ENCODE measurements at regions of chr16 and their contacts with region 1.

Region 1: DNA sequence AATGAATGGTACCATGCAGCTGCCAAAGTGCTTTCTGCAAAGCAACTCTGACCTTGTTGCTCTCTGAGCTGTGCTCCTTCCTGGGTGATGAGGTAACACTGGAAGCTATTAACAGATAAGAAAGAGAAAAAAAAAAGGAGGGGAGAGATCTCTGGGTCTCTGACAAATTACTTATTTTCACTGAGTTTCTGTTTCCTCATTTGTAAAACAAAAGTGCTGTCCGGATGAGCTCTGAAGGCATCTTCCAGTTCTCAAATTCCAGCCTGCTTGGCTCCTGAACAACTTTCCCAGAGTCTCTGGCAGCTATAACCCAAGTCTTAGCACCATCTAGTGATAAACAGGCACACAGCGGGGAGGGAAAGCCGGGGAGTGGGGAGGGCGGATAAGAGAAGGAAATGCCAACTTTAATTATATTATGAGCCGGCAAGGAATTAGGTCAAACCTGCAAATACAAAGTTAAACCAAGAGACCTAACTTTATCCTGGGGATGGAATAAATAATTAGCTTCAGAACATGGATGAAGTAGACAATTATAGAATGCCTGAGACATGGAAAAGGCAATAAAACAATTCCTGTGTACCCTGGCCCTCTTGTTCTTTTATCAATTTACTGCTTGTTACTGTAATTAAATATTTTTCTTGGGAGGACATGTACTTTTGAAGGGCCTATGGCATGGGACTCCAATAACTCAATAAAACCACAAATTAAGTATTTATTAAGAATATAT is 61.3 kb upstream of the KIFC3 start:
- DNase-seq: peak in 2 of 9 experiments; percentile 26 to 33
- ATAC-seq: no peak
- H3K4me3 ChIP-seq: no peak overlapping the region
- H3K4me3 Mint-ChIP-seq: no peak overlapping the region
- H3K27ac ChIP-seq: no peak overlapping the region
- H3K27ac Mint-ChIP-seq: no peak overlapping the region
- H3K4me1 ChIP-seq: no peaks in the 10 kb centered on the region
- H3K4me1 Mint-ChIP-seq: no peaks in the 10 kb centered on the region
- H3K27me3 ChIP-seq: no peaks in the 10 kb centered on the region
- H3K27me3 Mint-ChIP-seq: peaks cover 18% of the 10 kb centered on the region
- CTCF ChIP-seq: no peak

Region 2: GRCh38 chr16:57795431-57795878 is 68.1 kb before region 1 on chr16:
- CTCF ChIA-PET with region 1: no interaction called
- POLR2A ChIA-PET with region 1: no interaction called
- intact Hi-C with region 1: loop called in 1 of 2 experiments (anchors 10 kb)
- DNase-seq: peak in 5 of 9 experiments; percentile 17 to 61 (median 36)
- ATAC-seq: peak; percentile 34
- H3K4me3 ChIP-seq: no peak overlapping the region
- H3K4me3 Mint-ChIP-seq: no peak overlapping the region
- H3K27ac ChIP-seq: no peak overlapping the region
- H3K27ac Mint-ChIP-seq: no peak overlapping the region
- H3K4me1 ChIP-seq: peaks cover 8% of the 10 kb centered on the region
- H3K4me1 Mint-ChIP-seq: peaks cover 17% of the 10 kb centered on the region
- H3K27me3 ChIP-seq: no peaks in the 10 kb centered on the region
- H3K27me3 Mint-ChIP-seq: peaks cover 3% of the 10 kb centered on the region
- CTCF ChIP-seq: no peak

Region 3: GRCh38 chr16:57925310-57925709 is 61.7 kb after region 1 on chr16:
- CTCF ChIA-PET with region 1: no interaction called
- POLR2A ChIA-PET with region 1: no interaction called
- intact Hi-C with region 1: no loop called
- DNase-seq: no peak
- ATAC-seq: no peak
- H3K4me3 ChIP-seq: no peak overlapping the region
- H3K4me3 Mint-ChIP-seq: no peak overlapping the region
- H3K27ac ChIP-seq: no peak overlapping the region
- H3K27ac Mint-ChIP-seq: no peak overlapping the region
- H3K4me1 ChIP-seq: no peaks in the 10 kb centered on the region
- H3K4me1 Mint-ChIP-seq: no peaks in the 10 kb centered on the region
- H3K27me3 ChIP-seq: no peaks in the 10 kb centered on the region
- H3K27me3 Mint-ChIP-seq: peaks cover 2% of the 10 kb centered on the region
- CTCF ChIP-seq: no peak

Region 4: GRCh38 chr16:59108374-59108773 is 1244.8 kb after region 1 on chr16:
- CTCF ChIA-PET with region 1: no interaction called
- POLR2A ChIA-PET with region 1: no interaction called
- intact Hi-C with region 1: no loop called
- DNase-seq: no peak
- ATAC-seq: no peak
- H3K4me3 ChIP-seq: no peak overlapping the region
- H3K4me3 Mint-ChIP-seq: no peak overlapping the region
- H3K27ac ChIP-seq: no peak overlapping the region
- H3K27ac Mint-ChIP-seq: no peak overlapping the region
- H3K4me1 ChIP-seq: no peaks in the 10 kb centered on the region
- H3K4me1 Mint-ChIP-seq: no peaks in the 10 kb centered on the region
- H3K27me3 ChIP-seq: no peaks in the 10 kb centered on the region
- H3K27me3 Mint-ChIP-seq: peaks cover 2% of the 10 kb centered on the region
- CTCF ChIP-seq: no peak

Measured in CD8-positive, alpha-beta T cell (primary cell).